MCF 10A (cell line): ENCODE measurements at regions of chr3 and their contacts with region 1.

Region 1: DNA sequence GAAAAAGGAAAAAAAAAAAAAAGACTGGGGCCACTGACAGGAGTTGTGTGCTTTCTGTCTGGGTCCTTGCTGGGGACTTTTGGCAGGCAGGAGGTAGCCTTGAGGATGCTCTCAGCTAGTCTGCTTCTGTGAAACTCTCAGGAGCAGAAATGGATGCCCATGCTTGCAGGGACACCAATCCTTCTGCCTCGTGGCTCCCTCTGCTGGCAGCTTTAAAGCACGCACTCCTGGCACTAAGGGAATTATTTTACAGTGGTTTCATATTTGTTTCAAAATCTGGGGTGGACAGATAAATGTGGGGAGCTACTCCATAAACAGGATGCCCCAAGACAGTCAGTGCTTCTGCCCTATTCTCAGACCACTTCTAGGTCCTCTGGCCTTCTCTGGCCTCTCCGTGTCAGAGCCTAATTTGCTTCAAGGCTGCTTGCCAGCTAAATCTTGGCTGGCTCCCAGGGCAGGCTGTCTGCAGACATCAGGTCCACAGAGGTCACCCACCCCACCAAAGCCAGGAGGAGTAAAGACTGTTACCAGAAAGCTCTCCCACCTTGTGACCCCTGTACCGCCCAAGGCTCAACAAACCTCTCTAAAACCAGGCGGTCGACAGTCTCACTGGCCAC is 17.1 kb downstream of the TRAIP start:
- DNase-seq: peak; percentile 85
- H3K4me3 Mint-ChIP-seq: no peak overlapping the region
- H3K27ac Mint-ChIP-seq: no peak overlapping the region
- H3K4me1 Mint-ChIP-seq: no peaks in the 10 kb centered on the region
- H3K27me3 Mint-ChIP-seq: no peaks in the 10 kb centered on the region
- CTCF ChIP-seq: peak; percentile 84

Region 2: DNA sequence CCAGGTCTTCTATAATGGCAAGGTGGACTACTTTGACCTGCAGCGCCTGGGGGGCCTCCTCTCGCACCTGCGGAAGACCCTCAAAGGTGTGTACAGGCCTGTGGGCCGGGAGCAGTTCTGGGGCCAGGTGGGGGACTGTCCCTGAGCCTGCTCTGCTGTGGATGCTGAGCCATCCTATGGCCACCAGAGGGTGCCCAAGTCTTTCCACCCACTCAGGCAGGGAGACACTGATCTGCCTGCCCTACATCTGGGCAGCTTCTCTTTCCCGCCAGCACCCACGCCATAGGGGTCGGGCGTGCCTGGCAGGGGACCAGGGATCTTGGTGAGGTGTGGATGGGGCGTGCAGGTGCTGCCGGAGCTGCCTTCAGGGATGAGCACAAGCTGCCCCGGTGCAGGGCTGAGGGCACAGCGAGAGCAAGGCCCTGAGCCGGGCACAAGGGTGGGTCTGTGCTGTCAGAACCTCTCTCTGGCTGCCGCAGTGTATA is 135.8 kb before region 1 on chr3:
- CTCF ChIA-PET with region 1: interaction called, 15 read pairs
- POLR2A ChIA-PET with region 1: no interaction called
- intact Hi-C with region 1: loop called (anchors 1 kb)
- DNase-seq: peak; percentile 79
- H3K4me3 Mint-ChIP-seq: no peak overlapping the region
- H3K27ac Mint-ChIP-seq: no peak overlapping the region
- H3K4me1 Mint-ChIP-seq: peaks cover 14% of the 10 kb centered on the region
- H3K27me3 Mint-ChIP-seq: no peaks in the 10 kb centered on the region
- CTCF ChIP-seq: peak; percentile 90

Region 3: GRCh38 chr3:49786241-49786958 is 52.9 kb before region 1 on chr3 and contains the start of gene IP6K1:
- CTCF ChIA-PET with region 1: interaction called, 11 read pairs
- POLR2A ChIA-PET with region 1: no interaction called
- intact Hi-C with region 1: no loop called
- DNase-seq: peak; percentile 100
- H3K4me3 Mint-ChIP-seq: peak within 1 kb of the TSS; percentile 84
- H3K27ac Mint-ChIP-seq: peak within 1 kb of the TSS; percentile 97
- H3K4me1 Mint-ChIP-seq: no peaks in the 10 kb centered on the region
- H3K27me3 Mint-ChIP-seq: no peaks in the 10 kb centered on the region
- CTCF ChIP-seq: no peak
- total RNA-seq, gene IP6K1: 43.4 and 44.8 TPM in 2 replicates

Region 4: GRCh38 chr3:49813497-49814174 is 25.7 kb before region 1 on chr3 and contains the start of gene UBA7:
- CTCF ChIA-PET with region 1: interaction called, 201 read pairs
- POLR2A ChIA-PET with region 1: interaction called, 3 read pairs
- intact Hi-C with region 1: no loop called
- DNase-seq: peak; percentile 47
- H3K4me3 Mint-ChIP-seq: peak within 1 kb of the TSS; percentile 70
- H3K27ac Mint-ChIP-seq: peak within 1 kb of the TSS; percentile 42
- H3K4me1 Mint-ChIP-seq: no peaks in the 10 kb centered on the region
- H3K27me3 Mint-ChIP-seq: no peaks in the 10 kb centered on the region
- CTCF ChIP-seq: no peak
- total RNA-seq, gene UBA7: 3.8 and 6.6 TPM in 2 replicates

Region 5: DNA sequence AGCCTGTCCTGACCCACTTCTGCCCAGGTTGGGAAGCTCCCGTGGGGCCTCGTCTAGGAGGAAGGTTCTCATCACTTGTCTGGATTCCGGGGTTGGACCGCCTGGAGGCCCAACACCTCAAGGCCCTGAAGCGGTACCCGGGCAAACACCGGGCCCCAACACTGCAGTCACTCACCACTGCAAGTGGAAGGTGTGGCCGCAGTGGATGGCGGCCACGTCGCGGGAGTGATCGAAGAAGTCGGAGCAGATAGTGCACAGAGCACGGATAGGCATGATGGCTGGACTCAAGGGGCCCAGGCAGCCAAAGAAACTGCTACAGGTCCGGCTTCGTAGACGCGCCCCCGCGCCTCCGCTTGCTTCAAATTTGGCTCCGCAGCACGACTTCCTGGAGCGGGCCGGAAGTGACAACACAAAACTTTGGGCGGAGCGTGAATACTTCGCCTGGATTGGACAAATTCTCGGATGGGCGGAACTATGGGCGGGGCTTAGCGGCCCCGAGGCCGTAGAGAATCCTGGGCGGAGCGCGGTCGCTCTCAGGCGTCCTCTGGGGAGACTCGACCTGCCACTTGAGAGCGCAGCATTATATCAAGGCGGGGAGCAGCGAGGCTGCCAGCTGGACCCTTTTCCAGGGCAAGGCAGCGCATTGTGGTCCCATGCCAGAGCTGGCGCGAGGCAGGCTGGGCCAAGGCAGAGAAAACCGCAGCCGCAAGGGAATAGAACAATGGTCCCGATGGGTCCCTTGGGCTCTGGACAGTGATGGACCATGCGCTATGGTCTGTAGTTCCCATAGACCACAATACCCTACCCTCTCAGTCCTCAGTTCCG is 17.1 kb after region 1 on chr3 and contains the start of gene TRAIP:
- CTCF ChIA-PET with region 1: interaction called, 13 read pairs
- POLR2A ChIA-PET with region 1: no interaction called
- intact Hi-C with region 1: no loop called
- DNase-seq: peak; percentile 96
- H3K4me3 Mint-ChIP-seq: peak within 1 kb of the TSS; percentile 86
- H3K27ac Mint-ChIP-seq: peak within 1 kb of the TSS; percentile 74
- H3K4me1 Mint-ChIP-seq: peaks cover 8% of the 10 kb centered on the region
- H3K27me3 Mint-ChIP-seq: no peaks in the 10 kb centered on the region
- CTCF ChIP-seq: no peak
- total RNA-seq, gene TRAIP: 7.1 and 9.3 TPM in 2 replicates

Region 6: DNA sequence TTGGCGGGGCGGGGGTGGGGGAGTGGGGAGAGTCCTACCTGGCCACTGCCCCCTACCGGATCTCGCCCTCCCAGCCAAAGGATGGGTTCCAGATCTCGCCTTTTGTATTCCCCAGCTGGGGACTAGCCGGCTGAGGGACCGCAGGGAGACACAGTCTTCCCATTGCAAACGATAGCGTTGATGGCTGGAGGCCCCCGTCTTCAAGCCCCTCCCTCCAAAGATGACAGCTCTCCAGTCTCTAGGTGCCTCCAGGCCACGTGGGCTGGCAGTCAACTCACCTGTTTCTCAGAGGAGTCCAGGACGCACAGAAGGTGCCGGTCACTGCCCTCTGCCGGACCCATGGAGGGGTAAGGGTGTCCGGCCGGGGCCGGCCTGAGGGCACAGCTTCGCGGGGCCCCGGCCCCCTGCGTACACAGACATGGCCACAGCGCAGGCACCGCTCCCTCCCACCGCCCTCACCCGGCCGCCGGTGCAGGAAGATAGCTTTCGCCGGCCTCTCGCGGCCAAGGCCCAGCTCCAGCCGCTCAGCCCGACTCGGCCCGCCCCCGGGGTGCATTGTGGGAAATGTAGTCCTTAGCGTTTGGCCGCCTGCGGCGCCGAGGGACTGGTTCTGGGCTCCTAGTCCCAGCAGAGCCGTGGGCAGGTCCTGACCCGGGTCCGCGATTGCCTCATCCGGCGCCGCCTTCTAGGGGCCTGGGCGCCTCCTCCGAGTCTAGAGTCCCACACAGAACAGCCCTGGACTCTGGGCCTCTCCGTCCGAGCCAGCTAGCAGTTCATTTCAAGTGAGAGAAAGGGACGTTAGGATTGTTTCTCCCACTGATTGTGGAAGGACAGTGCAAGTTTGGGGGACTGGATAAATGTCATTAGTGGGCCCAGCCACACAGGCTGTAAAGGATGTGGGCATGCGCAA is 90.3 kb after region 1 on chr3 and contains the start of gene MON1A:
- CTCF ChIA-PET with region 1: interaction called, 14 read pairs
- POLR2A ChIA-PET with region 1: no interaction called
- intact Hi-C with region 1: no loop called
- DNase-seq: peak; percentile 95
- H3K4me3 Mint-ChIP-seq: peak within 1 kb of the TSS; percentile 87
- H3K27ac Mint-ChIP-seq: peak within 1 kb of the TSS; percentile 75
- H3K4me1 Mint-ChIP-seq: peaks cover 12% of the 10 kb centered on the region
- H3K27me3 Mint-ChIP-seq: no peaks in the 10 kb centered on the region
- CTCF ChIP-seq: peak; percentile 40
- total RNA-seq, gene MON1A: 9.6 and 18.6 TPM in 2 replicates